H1 (cell line): ENCODE measurements at regions of chr2 and their contacts with region 1.

Region 1: GRCh38 chr2:127437781-127438726 is 19.8 kb downstream of the PROC start:
- DNase-seq: peak in 1 of 2 experiments; percentile 45
- H3K4me3 ChIP-seq: no peak overlapping the region
- H3K27ac ChIP-seq: no peak overlapping the region
- H3K4me1 ChIP-seq: no peaks in the 10 kb centered on the region
- H3K27me3 ChIP-seq: no peaks in the 10 kb centered on the region
- CTCF ChIP-seq: no peak
- EP300 ChIP-seq: no peak
- POLR2A ChIP-seq: no peak
- RAD21 ChIP-seq: peak; percentile 8 to 27; a peak in 1 of 4 replicates

Region 2: GRCh38 chr2:127398239-127398590 is 39.8 kb before region 1 on chr2:
- CTCF ChIA-PET with region 1: no interaction called
- POLR2A ChIA-PET with region 1: no interaction called
- DNase-seq: no peak
- H3K4me3 ChIP-seq: no peak overlapping the region
- H3K27ac ChIP-seq: no peak overlapping the region
- H3K4me1 ChIP-seq: peaks cover 0 to 4% (median 2%) of the 10 kb centered on the region in 4 experiments; a peak in 1 of 7 replicates
- H3K27me3 ChIP-seq: no peaks in the 10 kb centered on the region
- CTCF ChIP-seq: no peak
- EP300 ChIP-seq: no peak
- POLR2A ChIP-seq: no peak
- RAD21 ChIP-seq: no peak

Region 3: DNA sequence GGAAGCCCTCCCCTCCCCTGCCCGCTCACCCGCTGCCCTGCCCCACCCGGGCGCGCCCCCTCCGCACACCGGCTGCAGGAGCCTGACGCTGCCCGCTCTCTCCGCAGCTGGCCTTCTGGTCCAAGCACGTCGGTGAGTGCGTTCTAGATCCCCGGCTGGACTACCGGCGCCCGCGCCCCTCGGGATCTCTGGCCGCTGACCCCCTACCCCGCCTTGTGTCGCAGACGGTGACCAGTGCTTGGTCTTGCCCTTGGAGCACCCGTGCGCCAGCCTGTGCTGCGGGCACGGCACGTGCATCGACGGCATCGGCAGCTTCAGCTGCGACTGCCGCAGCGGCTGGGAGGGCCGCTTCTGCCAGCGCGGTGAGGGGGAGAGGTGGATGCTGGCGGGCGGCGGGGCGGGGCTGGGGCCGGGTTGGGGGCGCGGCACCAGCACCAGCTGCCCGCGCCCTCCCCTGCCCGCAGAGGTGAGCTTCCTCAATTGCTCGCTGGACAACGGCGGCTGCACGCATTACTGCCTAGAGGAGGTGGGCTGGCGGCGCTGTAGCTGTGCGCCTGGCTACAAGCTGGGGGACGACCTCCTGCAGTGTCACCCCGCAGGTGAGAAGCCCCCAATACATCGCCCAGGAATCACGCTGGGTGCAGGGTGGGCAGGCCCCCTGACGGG is 15.1 kb before region 1 on chr2:
- CTCF ChIA-PET with region 1: interaction called, 46 read pairs
- POLR2A ChIA-PET with region 1: interaction called, 5 read pairs
- DNase-seq: peak in 1 of 2 experiments; percentile 78
- H3K4me3 ChIP-seq: peak overlapping the region; percentile 57 to 85 (median 59)
- H3K27ac ChIP-seq: no peak overlapping the region
- H3K4me1 ChIP-seq: peaks cover 0 to 13% (median 5%) of the 10 kb centered on the region in 4 experiments; a peak in 5 of 7 replicates
- H3K27me3 ChIP-seq: peaks cover 0 to 29% (median 27%) of the 10 kb centered on the region in 4 experiments; a peak in 6 of 7 replicates
- CTCF ChIP-seq: no peak
- EP300 ChIP-seq: no peak
- POLR2A ChIP-seq: peak in 1 of 2 experiments; percentile 45; a peak in 1 of 3 replicates
- RAD21 ChIP-seq: no peak